Activated B cell treated with CpG ODN at 0.5 μM for 24 hours (primary cell): ENCODE measurements at regions of chr1 and their contacts with region 1.

Region 1: DNA sequence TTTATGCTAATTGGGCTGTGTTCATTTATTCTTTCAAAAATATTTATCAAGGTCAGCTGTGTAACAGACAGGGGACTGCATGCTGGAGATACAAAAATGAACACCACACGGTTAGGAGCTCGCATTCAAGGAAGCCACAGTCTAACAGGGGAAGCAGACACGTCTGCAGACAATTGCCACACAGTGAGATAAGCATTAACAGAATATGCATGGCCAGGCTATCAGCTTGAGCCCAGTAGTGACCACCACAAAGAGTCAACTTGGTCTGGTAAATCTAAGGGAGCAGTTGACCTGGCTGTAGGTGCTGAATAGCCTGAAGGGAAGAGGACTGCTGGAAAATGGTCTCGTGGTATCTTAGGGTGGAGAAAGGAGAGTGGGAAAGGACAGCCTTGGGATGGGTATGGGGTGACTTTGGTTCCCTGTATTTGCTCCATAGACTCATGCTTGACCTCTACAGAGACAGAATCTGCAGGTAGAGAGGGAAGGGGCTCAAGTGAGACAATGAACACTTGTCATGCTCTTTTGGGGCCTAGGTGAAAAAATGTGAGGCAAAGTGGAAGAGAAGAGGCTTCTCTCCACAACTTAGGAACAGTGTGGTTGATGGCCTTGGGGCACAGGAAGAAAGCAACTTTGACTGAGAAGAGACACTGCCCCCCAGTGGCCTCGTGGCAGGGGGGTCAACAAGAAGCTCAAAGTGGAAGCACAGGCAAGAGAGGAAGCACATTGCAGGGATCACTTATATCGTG is 7.6 kb upstream of the NPL start:
- DNase-seq: peak; percentile 54
- ATAC-seq: peak; percentile 88
- H3K4me3 Mint-ChIP-seq: no peak overlapping the region
- H3K27ac Mint-ChIP-seq: no peak overlapping the region
- H3K4me1 Mint-ChIP-seq: peaks cover 10% of the 10 kb centered on the region
- H3K27me3 Mint-ChIP-seq: no peaks in the 10 kb centered on the region
- CTCF ChIP-seq: peak; percentile 53

Region 2: GRCh38 chr1:182084487-182085316 is 697.3 kb before region 1 on chr1:
- CTCF ChIA-PET with region 1: no interaction called
- POLR2A ChIA-PET with region 1: no interaction called
- intact Hi-C with region 1: loop called (anchors 5 kb)
- DNase-seq: peak; percentile 47
- ATAC-seq: peak; percentile 77
- H3K4me3 Mint-ChIP-seq: no peak overlapping the region
- H3K27ac Mint-ChIP-seq: no peak overlapping the region
- H3K4me1 Mint-ChIP-seq: peaks cover 4% of the 10 kb centered on the region
- H3K27me3 Mint-ChIP-seq: no peaks in the 10 kb centered on the region
- CTCF ChIP-seq: no peak

Region 3: DNA sequence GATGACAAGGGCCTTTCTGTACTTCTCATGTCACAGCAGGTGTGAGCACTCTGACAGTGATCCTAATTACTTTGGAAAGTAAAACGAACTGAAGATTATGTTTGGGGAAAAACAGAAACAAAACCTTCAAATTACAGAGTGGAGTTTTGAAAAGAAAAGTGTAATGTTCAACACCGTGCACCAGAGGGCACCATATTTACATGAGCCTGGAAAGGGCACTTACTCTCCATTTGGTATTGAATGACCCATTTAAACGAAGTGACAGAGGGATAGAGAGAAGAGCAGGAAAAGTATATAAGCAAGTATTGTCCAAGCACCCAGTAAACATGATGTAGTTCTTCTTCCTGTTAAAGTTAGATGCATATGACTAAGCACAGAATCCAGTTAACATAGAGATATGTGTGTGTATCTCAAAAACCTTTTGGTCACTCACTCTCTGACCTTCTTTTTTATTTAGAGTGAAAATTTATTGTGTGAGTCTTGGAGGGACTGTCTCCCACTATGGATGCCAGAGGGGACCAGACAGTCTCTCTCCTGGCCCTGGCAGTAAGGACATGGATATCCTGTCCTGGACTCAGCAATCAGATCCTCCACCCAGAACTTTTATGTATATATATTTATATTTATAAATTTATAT is 335.9 kb before region 1 on chr1:
- CTCF ChIA-PET with region 1: interaction called, 7 read pairs
- POLR2A ChIA-PET with region 1: no interaction called
- intact Hi-C with region 1: loop called (anchors 1 kb)
- DNase-seq: no peak
- ATAC-seq: peak; percentile 81
- H3K4me3 Mint-ChIP-seq: no peak overlapping the region
- H3K27ac Mint-ChIP-seq: no peak overlapping the region
- H3K4me1 Mint-ChIP-seq: peaks cover 4% of the 10 kb centered on the region
- H3K27me3 Mint-ChIP-seq: no peaks in the 10 kb centered on the region
- CTCF ChIP-seq: peak; percentile 58

Region 4: GRCh38 chr1:182614796-182615454 is 167.1 kb before region 1 on chr1:
- CTCF ChIA-PET with region 1: interaction called, 15 read pairs
- POLR2A ChIA-PET with region 1: no interaction called
- intact Hi-C with region 1: no loop called
- DNase-seq: peak; percentile 58
- ATAC-seq: peak; percentile 75
- H3K4me3 Mint-ChIP-seq: peak overlapping the region; percentile 87
- H3K27ac Mint-ChIP-seq: peak overlapping the region; percentile 81
- H3K4me1 Mint-ChIP-seq: peaks cover 43% of the 10 kb centered on the region
- H3K27me3 Mint-ChIP-seq: peaks cover 11% of the 10 kb centered on the region
- CTCF ChIP-seq: no peak

Region 5: GRCh38 chr1:182795563-182796228 is 13.7 kb after region 1 on chr1:
- CTCF ChIA-PET with region 1: interaction called, 11 read pairs
- POLR2A ChIA-PET with region 1: interaction called, 4 read pairs
- intact Hi-C with region 1: no loop called
- DNase-seq: no peak
- ATAC-seq: peak; percentile 56
- H3K4me3 Mint-ChIP-seq: no peak overlapping the region
- H3K27ac Mint-ChIP-seq: no peak overlapping the region
- H3K4me1 Mint-ChIP-seq: peaks cover 13% of the 10 kb centered on the region
- H3K27me3 Mint-ChIP-seq: peaks cover 3% of the 10 kb centered on the region
- CTCF ChIP-seq: no peak